ENCODE measurements at regions of chr10 and their contacts with region 1.

Region 1: DNA sequence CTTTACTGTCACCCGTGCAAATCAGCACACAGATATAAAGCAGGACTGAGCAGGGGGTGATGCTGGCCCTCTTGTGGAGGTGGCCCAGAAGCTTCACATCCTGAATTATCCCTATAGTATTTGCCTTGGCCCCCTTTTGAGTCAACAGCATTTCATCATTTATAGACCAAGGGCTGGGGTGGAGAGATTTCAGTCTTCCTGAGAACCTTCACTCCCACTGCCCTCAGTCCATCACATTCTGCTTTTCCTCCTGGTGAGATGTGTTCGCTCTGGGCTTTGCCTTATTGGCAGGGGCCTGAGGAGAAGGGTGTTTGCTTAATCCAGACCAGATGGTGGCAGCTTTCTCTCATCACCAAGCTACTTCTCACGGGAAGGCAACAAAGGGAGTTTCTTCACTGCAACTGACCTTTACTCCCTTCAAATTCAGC is 47.7 kb downstream of the NOC3L start:
- DNase-seq: no peak
- H3K4me3 ChIP-seq: no peak overlapping the region
- H3K27ac ChIP-seq: peak overlapping the region in 2 of 4 donors; percentile 64 to 73
- H3K4me1 ChIP-seq: peaks cover 0 to 21% (median 15%) of the 10 kb centered on the region in 4 donors
- H3K27me3 ChIP-seq: no peaks in the 10 kb centered on the region
- CTCF ChIP-seq: no peak
- EP300 ChIP-seq: no peak
- POLR2A ChIP-seq: no peak

Region 2: GRCh38 chr10:94279835-94280709 is 35.0 kb before region 1 on chr10:
- intact Hi-C with region 1: loop called (anchors 5 kb)
- DNase-seq: no peak
- H3K4me3 ChIP-seq: no peak overlapping the region
- H3K27ac ChIP-seq: peak overlapping the region in 2 of 4 donors; percentile 8 to 28
- H3K4me1 ChIP-seq: peaks cover 0 to 19% (median 6%) of the 10 kb centered on the region in 4 donors
- H3K27me3 ChIP-seq: no peaks in the 10 kb centered on the region
- CTCF ChIP-seq: peak; percentile 21 to 81 (median 66)
- EP300 ChIP-seq: no peak
- POLR2A ChIP-seq: no peak

Region 3: GRCh38 chr10:94429049-94429707 is 114.1 kb after region 1 on chr10:
- intact Hi-C with region 1: no loop called
- DNase-seq: no peak
- H3K4me3 ChIP-seq: no peak overlapping the region
- H3K27ac ChIP-seq: peak overlapping the region in 1 of 4 donors; percentile 9
- H3K4me1 ChIP-seq: peaks cover 0 to 12% (median 4%) of the 10 kb centered on the region in 4 donors
- H3K27me3 ChIP-seq: no peaks in the 10 kb centered on the region
- CTCF ChIP-seq: no peak
- EP300 ChIP-seq: no peak
- POLR2A ChIP-seq: no peak

Region 4: GRCh38 chr10:94521276-94522250 is 206.5 kb after region 1 on chr10:
- intact Hi-C with region 1: no loop called
- DNase-seq: no peak
- H3K4me3 ChIP-seq: no peak overlapping the region
- H3K27ac ChIP-seq: no peak overlapping the region
- H3K4me1 ChIP-seq: no peaks in the 10 kb centered on the region
- H3K27me3 ChIP-seq: no peaks in the 10 kb centered on the region
- CTCF ChIP-seq: no peak
- EP300 ChIP-seq: no peak
- POLR2A ChIP-seq: no peak